HepG2 (cell line): ENCODE measurements at regions of chr6 and their contacts with region 1.

Region 1: DNA sequence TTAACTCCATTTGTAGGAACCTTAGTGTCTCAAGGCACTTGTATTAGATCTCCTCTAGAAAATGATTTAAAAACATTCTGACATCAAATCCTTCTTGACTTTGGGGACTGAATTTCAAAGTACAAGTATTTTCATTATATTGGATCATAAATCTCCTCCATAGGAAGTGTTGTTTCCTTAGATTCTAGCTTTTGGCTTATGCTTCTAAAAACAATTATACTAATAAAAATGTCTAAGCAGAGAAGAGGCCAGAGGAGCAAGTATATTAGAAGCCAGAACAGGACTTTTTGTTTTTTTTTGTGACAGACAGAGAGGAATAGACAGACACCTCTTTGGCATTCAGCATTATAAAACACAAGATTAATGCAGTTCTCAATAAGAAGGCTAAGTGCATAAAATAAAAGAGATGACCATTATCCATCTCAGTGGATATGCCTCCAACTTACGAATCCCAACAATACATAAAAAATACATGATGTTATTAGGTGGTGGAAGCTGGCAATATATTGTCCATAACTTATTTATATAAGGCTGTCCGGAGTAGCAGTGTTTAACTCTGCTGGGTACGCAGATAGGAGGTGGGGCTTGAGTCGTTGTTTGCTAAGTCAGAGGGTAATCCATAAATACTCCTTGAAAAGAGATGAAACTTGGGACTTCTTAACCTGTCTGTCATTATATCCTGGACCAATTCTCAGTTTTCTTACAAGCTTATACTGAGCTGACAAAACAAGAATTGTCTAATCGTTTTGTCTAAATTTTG is 31.9 kb upstream of the NOX3 start:
- DNase-seq: peak; percentile 52
- ATAC-seq: no peak
- H3K4me3 ChIP-seq: no peak overlapping the region; a peak in 1 of 6 replicates
- H3K27ac ChIP-seq: peak overlapping the region; percentile 84
- H3K4me1 ChIP-seq: peaks cover 96% of the 10 kb centered on the region
- H3K27me3 ChIP-seq: no peaks in the 10 kb centered on the region
- CTCF ChIP-seq: no peak
- EP300 ChIP-seq: peak in 1 of 2 experiments; percentile 56; a peak in 2 of 4 replicates
- POLR2A ChIP-seq: peak in 1 of 2 experiments; percentile 25; a peak in 1 of 4 replicates
- RAD21 ChIP-seq: no peak

Region 2: DNA sequence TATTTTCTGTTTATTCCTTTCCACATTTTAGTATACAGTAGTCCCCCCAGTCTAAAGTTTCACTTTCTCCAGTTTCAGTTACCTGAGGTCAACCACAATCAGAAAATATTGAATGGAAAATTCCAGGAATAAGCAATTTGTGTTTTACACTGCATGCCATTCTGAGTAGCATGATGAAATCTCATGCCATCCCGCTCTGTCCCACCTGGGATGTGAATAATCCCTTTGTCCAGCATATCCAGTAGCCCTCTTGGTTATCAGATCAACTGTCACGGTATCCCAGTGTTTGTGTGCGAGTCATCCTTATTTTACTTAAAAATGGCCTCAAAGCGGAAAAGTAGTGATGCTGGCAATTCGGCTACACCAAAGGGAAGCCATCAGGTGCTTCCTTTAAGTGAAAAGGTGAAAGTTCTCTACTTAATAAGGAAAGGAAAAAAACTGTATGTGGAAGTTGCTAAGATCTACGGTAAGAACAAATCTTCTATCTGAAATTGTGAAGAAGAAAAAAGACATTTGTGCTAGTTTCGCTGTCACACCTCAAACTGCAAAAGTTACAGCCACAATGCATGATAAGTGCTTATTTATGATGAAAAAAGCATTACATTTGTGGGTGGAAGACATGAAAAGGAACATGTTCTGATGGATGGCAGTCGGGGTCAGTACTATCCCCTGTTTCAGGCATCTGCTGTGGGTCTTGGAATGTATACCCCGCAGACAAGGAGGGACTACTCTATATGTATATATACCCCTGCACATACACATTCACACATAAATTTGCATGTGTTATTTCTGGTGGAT is 43.2 kb before region 1 on chr6:
- CTCF ChIA-PET with region 1: no interaction called
- POLR2A ChIA-PET with region 1: interaction called, 7 read pairs
- in situ Hi-C with region 1: loop called (anchors 5 kb)
- intact Hi-C with region 1: loop called (anchors 2 kb)
- DNase-seq: peak; percentile 100
- ATAC-seq: peak; percentile 100
- H3K4me3 ChIP-seq: peak overlapping the region in 1 of 3 experiments; percentile 28; a peak in 1 of 6 replicates
- H3K27ac ChIP-seq: peak overlapping the region; percentile 96
- H3K4me1 ChIP-seq: peaks cover 78% of the 10 kb centered on the region
- H3K27me3 ChIP-seq: no peaks in the 10 kb centered on the region
- CTCF ChIP-seq: no peak
- EP300 ChIP-seq: peak; percentile 99
- POLR2A ChIP-seq: peak in 1 of 2 experiments; percentile 59; a peak in 2 of 4 replicates
- RAD21 ChIP-seq: peak; percentile 37

Region 3: DNA sequence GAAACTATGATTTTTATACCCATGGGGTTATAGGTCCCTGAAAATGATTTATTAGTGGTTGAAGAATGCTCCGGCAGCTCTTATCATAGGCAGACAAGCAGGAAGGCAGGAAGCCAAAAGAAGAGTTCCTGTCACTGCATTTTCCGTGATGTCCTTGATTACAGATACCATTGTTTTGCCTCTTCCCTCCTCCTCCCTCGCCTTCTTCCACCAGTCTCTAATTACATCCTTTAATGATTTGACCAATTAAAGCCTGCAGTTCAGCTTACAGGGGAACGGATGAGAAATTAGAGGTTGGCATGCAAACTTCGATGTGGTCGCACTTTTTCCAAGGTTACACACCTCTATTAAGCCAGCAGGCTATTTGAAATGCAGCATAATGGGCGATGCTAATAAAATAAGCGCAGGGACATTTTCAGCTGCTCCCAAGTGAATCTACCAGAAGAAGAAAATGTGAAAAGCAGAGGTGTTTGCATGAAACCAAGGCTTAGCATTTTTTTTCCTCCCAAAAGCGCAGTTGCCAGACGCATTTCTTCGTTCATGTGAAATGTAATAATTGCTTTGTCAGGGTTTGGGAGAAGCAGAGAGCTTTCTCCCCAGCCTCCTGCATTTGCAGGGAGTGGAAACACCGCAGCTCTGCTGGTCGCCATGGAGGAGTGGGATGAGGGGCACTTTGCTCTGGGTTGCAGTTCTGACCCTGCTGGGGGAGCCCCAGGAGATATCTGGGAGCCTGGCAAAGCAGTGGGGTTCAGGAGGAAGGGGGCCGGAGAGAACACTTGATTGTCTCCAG is 37.9 kb before region 1 on chr6:
- CTCF ChIA-PET with region 1: no interaction called
- POLR2A ChIA-PET with region 1: interaction called, 7 read pairs
- in situ Hi-C with region 1: loop called (anchors 5 kb)
- intact Hi-C with region 1: loop called (anchors 2 kb)
- DNase-seq: no peak
- ATAC-seq: no peak; the same call in 1 of the 3 replicates
- H3K4me3 ChIP-seq: no peak overlapping the region
- H3K27ac ChIP-seq: peak overlapping the region; percentile 7
- H3K4me1 ChIP-seq: peaks cover 62% of the 10 kb centered on the region
- H3K27me3 ChIP-seq: no peaks in the 10 kb centered on the region
- CTCF ChIP-seq: no peak
- EP300 ChIP-seq: no peak
- POLR2A ChIP-seq: no peak
- RAD21 ChIP-seq: no peak